ENCODE measurements at regions of chr1 and their contacts with region 1.

Region 1: DNA sequence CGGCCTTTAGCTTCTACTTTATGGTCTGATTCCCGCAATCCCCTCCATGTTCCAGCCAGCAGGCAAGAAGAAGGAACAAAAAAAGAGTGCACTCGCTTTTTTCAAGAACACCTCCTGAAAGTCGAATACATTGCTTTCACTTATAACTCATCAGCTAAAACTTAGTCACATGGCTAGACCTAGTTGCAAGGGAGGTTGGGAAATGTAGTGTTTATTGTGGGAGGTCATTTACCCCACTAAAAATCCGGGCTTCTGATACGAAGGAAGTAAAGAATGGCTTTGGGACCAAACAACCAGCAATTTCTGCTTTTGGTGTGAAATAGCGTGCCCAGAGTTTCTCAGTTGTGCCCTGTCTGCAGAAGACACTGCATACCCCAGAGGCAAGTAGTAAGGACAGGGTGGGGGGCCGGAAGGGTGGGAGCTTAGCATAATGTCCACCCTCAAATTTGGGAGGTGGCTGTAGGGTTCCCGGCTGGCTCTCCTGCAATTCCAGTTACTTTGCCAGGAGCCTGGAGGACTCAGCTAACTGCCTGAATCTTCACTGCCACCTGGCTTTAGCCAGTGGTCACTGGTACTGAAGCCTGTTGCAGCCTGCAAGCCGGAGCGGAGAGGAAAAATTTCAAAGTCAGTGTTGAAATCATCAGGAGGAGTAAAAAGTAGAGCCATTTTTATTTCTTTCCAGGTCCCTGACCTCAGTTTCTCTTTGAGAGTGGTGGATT is 57.7 kb upstream of the F3 start:
- DNase-seq: peak; percentile 47 to 81 (median 65)
- H3K4me3 ChIP-seq: peak overlapping the region in 1 of 3 experiments; percentile 41
- H3K4me3 Mint-ChIP-seq: peak overlapping the region; percentile 48 to 84
- H3K27ac ChIP-seq: no peak overlapping the region
- H3K27ac Mint-ChIP-seq: peak overlapping the region in 4 of 7 donors; percentile 30 to 87 (median 76)
- H3K4me1 ChIP-seq: peaks cover 52 to 60% of the 10 kb centered on the region in 2 donors
- H3K4me1 Mint-ChIP-seq: peaks cover 60% of the 10 kb centered on the region
- H3K27me3 ChIP-seq: no peaks in the 10 kb centered on the region
- H3K27me3 Mint-ChIP-seq: peaks cover 4 to 13% (median 9%) of the 10 kb centered on the region in 3 donors
- CTCF ChIP-seq: no peak

Region 2: GRCh38 chr1:94522304-94522703 is 77.0 kb before region 1 on chr1:
- intact Hi-C with region 1: no loop called
- DNase-seq: peak in 2 of 3 donors; percentile 31 to 37
- H3K4me3 ChIP-seq: no peak overlapping the region
- H3K4me3 Mint-ChIP-seq: no peak overlapping the region
- H3K27ac ChIP-seq: no peak overlapping the region
- H3K27ac Mint-ChIP-seq: no peak overlapping the region
- H3K4me1 ChIP-seq: peaks cover 0 to 5% of the 10 kb centered on the region in 2 donors
- H3K4me1 Mint-ChIP-seq: peaks cover 11% of the 10 kb centered on the region
- H3K27me3 ChIP-seq: no peaks in the 10 kb centered on the region
- H3K27me3 Mint-ChIP-seq: peaks cover 0 to 3% (median 1%) of the 10 kb centered on the region in 3 donors
- CTCF ChIP-seq: peak; percentile 34

Region 3: DNA sequence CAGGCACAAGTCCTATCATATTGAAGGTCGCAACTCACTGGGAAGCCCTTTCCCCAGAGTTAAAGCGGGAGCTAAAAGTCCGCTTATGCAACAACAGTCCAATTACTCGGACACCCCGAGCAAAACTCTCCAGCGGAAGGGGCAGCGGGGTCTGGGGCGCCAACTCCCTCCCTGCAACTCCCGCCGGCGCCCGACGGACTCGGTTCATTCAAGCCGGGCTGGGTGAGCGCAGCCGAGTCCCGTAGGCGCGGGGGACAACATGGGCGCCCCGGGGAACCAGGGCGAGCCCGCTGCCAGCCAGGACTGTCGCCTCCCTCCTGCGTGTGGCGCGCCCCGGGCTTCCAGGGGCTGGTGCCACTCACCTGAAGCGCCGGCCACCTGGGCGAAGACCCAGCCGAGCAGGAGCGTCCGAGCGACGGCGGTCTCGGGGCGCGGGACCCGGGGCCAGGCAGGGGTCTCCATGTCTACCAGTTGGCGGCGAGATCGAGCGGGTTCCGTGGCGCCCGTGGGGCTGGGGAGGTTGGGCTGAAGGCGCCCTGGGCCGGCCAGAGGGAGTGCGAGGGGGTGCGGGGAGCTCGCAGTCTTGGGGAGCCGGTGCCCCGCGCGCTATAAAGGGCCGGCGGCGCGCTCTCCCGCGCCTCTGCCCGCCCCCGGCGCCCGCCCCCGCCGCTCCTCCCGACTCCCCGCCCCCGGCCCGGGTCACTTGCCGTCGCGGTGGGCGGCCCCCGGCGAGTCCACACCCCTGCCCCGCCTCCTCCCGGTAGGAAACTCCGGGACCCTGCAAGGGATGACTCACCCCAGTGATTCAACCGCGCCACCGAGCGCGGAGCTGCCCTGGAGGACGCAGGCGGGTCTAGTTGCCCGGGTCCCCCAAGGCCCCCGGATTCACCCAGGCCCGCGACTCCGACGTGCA is 57.8 kb before region 1 on chr1 and contains the start of gene F3:
- intact Hi-C with region 1: loop called in 1 of 2 experiments (anchors 10 kb)
- DNase-seq: peak; percentile 82 to 96 (median 88)
- H3K4me3 ChIP-seq: peak within 1 kb of the TSS; percentile 72 to 89 (median 83)
- H3K4me3 Mint-ChIP-seq: peak within 1 kb of the TSS; percentile 90 to 95
- H3K27ac ChIP-seq: peak within 1 kb of the TSS in 1 of 2 donors; percentile 81
- H3K27ac Mint-ChIP-seq: peak within 1 kb of the TSS; percentile 80 to 95 (median 92)
- H3K4me1 ChIP-seq: peaks cover 23 to 37% of the 10 kb centered on the region in 2 donors
- H3K4me1 Mint-ChIP-seq: peaks cover 41% of the 10 kb centered on the region
- H3K27me3 ChIP-seq: peaks cover 3 to 7% of the 10 kb centered on the region in 2 donors
- H3K27me3 Mint-ChIP-seq: peaks cover 0 to 13% (median 5%) of the 10 kb centered on the region in 3 donors
- CTCF ChIP-seq: no peak
- polyA plus RNA-seq, gene F3: 0.29 to 3.7 (median 0.77) TPM

Region 4: GRCh38 chr1:94614996-94615395 is 15.7 kb after region 1 on chr1:
- intact Hi-C with region 1: no loop called
- DNase-seq: peak; percentile 50 to 88 (median 71)
- H3K4me3 ChIP-seq: peak overlapping the region in 1 of 3 experiments; percentile 10
- H3K4me3 Mint-ChIP-seq: no peak overlapping the region
- H3K27ac ChIP-seq: peak overlapping the region; percentile 9 to 30
- H3K27ac Mint-ChIP-seq: peak overlapping the region; percentile 60 to 89 (median 80)
- H3K4me1 ChIP-seq: peaks cover 31 to 43% of the 10 kb centered on the region in 2 donors
- H3K4me1 Mint-ChIP-seq: peaks cover 38% of the 10 kb centered on the region
- H3K27me3 ChIP-seq: no peaks in the 10 kb centered on the region
- H3K27me3 Mint-ChIP-seq: peaks cover 0 to under 1% (median 0%) of the 10 kb centered on the region in 3 donors
- CTCF ChIP-seq: no peak

Region 5: GRCh38 chr1:94773931-94774422 is 174.7 kb after region 1 on chr1:
- intact Hi-C with region 1: loop called in 1 of 2 experiments (anchors 10 kb)
- DNase-seq: peak in 1 of 3 donors; percentile 44
- H3K4me3 ChIP-seq: no peak overlapping the region
- H3K4me3 Mint-ChIP-seq: no peak overlapping the region
- H3K27ac ChIP-seq: no peak overlapping the region
- H3K27ac Mint-ChIP-seq: peak overlapping the region in 2 of 7 donors; percentile 0 to 70
- H3K4me1 ChIP-seq: peaks cover 26% of the 10 kb centered on the region in 2 donors
- H3K4me1 Mint-ChIP-seq: peaks cover 21% of the 10 kb centered on the region
- H3K27me3 ChIP-seq: no peaks in the 10 kb centered on the region
- H3K27me3 Mint-ChIP-seq: peaks cover 0 to 2% (median 0%) of the 10 kb centered on the region in 3 donors
- CTCF ChIP-seq: no peak

Measured in CD14-positive monocyte (primary cell).